A549 (cell line): ENCODE measurements at regions of chr2 and their contacts with region 1.

Region 1: GRCh38 chr2:70984576-70985282 is 6.3 kb downstream of the ANKRD53 start:
- DNase-seq: peak; percentile 67 to 79
- ATAC-seq: peak; percentile 87 to 98
- H3K4me3 ChIP-seq: no peak overlapping the region
- H3K27ac ChIP-seq: no peak overlapping the region
- H3K4me1 ChIP-seq: no peaks in the 10 kb centered on the region
- CTCF ChIP-seq: peak; percentile 67
- EP300 ChIP-seq: no peak
- POLR2A ChIP-seq: no peak
- RAD21 ChIP-seq: peak in 1 of 2 experiments; percentile 20; a peak in 1 of 5 replicates

Region 2: DNA sequence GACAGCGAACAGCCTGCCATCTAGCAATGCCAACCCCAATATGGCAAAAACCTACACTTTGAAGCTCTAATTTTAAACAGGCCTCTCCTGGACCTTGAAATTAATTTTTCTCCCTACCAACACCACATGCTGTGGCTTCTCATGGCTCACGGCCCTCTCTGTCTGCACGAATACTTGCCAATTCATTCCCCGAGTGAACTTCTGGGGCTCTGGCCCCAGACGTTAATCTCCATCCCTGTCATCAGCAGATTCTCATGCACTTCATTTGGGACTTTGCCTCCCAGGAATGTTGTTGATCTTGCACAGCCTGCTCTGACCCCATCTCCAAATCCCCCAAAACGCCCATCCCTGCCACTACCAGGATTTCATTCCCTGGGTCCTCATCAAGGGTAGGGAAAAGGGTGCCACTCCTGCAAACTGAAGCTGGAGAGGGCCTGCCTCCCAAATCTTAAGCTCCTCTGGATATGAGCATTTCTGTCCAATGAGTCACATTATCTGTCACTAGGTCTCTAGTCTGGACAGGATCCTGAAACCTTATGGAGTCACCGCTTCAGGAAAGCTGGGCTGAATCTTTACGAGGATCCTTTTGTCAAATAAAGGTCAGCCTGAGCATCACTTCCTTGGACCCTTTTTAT is 204.7 kb before region 1 on chr2:
- CTCF ChIA-PET with region 1: no interaction called
- POLR2A ChIA-PET with region 1: no interaction called
- DNase-seq: no peak
- ATAC-seq: peak in 1 of 2 experiments; percentile 44; a peak in 2 of 6 replicates
- H3K4me3 ChIP-seq: no peak overlapping the region
- H3K27ac ChIP-seq: no peak overlapping the region
- H3K4me1 ChIP-seq: peaks cover 23% of the 10 kb centered on the region
- CTCF ChIP-seq: no peak
- EP300 ChIP-seq: no peak
- POLR2A ChIP-seq: no peak
- RAD21 ChIP-seq: no peak

Region 3: GRCh38 chr2:70994756-70995729 is 10.3 kb after region 1 on chr2 and contains the start of gene TEX261:
- CTCF ChIA-PET with region 1: interaction called, 37 read pairs
- POLR2A ChIA-PET with region 1: no interaction called
- DNase-seq: peak; percentile 92 to 93
- ATAC-seq: peak; percentile 96 to 99
- H3K4me3 ChIP-seq: peak within 1 kb of the TSS; percentile 83
- H3K27ac ChIP-seq: peak within 1 kb of the TSS; percentile 81 to 96
- H3K4me1 ChIP-seq: peaks cover 17% of the 10 kb centered on the region; the same call in 2 of the 3 replicates
- CTCF ChIP-seq: peak; percentile 89
- EP300 ChIP-seq: no peak
- POLR2A ChIP-seq: peak; percentile 53
- RAD21 ChIP-seq: 0 out of 5 replicates have a peak, but pooled peaks of 1 of the 2 experiments have one; percentile 12
- polyA plus RNA-seq, gene TEX261: 87.1 and 109 TPM in 2 replicates

Region 4: GRCh38 chr2:71100195-71100964 is 115.7 kb after region 1 on chr2:
- CTCF ChIA-PET with region 1: no interaction called
- POLR2A ChIA-PET with region 1: no interaction called
- DNase-seq: peak; percentile 74 to 83
- ATAC-seq: peak; percentile 92 to 97
- H3K4me3 ChIP-seq: no peak overlapping the region
- H3K27ac ChIP-seq: no peak overlapping the region
- H3K4me1 ChIP-seq: no peaks in the 10 kb centered on the region
- CTCF ChIP-seq: peak; percentile 78
- EP300 ChIP-seq: no peak
- POLR2A ChIP-seq: no peak
- RAD21 ChIP-seq: peak; percentile 56 to 71; a peak in 4 of 5 replicates

Region 5: GRCh38 chr2:71477231-71477691 is 492.5 kb after region 1 on chr2:
- CTCF ChIA-PET with region 1: no interaction called
- POLR2A ChIA-PET with region 1: no interaction called
- DNase-seq: no peak
- ATAC-seq: no peak
- H3K4me3 ChIP-seq: no peak overlapping the region
- H3K27ac ChIP-seq: no peak overlapping the region
- H3K4me1 ChIP-seq: no peaks in the 10 kb centered on the region
- CTCF ChIP-seq: no peak
- EP300 ChIP-seq: no peak
- POLR2A ChIP-seq: no peak
- RAD21 ChIP-seq: no peak